SK-N-SH (cell line): ENCODE measurements at regions of chr20 and their contacts with region 1.

Region 1: DNA sequence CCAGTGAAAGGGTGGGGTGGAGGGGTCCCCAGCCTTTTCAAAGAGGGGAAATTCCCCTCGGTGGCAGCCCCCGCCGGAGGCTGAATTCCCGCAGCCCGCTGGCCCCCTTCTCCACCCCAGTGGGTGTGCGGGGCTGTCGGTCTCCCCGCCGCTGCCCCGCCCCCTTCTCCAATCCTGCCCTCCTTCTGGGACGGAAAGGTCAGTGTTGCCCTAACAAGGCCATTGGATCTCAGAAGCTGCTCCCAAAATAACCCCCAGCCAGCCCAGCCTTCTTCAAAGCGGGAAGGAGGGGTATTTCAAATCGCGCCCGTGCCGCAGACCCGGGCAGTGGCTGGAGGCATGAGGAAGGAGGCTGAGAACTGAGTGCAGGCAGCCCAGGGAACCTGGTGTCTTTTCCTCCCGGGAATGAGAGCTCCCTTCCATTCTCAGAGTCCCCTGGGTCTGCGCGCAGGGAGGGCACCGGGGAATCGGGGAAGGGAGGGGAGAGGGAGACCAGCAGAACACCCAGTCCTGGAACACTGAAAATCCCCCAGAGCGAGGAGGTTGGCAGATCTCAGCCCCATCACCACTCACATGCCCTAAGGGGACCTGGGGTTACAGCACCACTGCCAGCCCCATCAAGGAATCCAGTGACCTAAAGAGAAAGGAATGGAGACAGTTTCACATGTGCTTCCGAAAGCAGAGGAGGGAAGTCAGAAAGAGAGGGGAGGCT is at the start of gene JPH2:
- DNase-seq: peak; percentile 64
- H3K4me3 ChIP-seq: peak within 1 kb of the TSS; percentile 39 to 60
- H3K27ac ChIP-seq: peak within 1 kb of the TSS; percentile 54 to 78
- H3K4me1 ChIP-seq: peaks cover 11 to 16% of the 10 kb centered on the region in 2 experiments; a peak in 2 of 4 replicates
- H3K27me3 ChIP-seq: no peaks in the 10 kb centered on the region
- CTCF ChIP-seq: no peak
- EP300 ChIP-seq: no peak
- RAD21 ChIP-seq: no peak
- polyA plus RNA-seq, gene JPH2: 0.67 and 0.75 TPM in 2 replicates

Region 2: DNA sequence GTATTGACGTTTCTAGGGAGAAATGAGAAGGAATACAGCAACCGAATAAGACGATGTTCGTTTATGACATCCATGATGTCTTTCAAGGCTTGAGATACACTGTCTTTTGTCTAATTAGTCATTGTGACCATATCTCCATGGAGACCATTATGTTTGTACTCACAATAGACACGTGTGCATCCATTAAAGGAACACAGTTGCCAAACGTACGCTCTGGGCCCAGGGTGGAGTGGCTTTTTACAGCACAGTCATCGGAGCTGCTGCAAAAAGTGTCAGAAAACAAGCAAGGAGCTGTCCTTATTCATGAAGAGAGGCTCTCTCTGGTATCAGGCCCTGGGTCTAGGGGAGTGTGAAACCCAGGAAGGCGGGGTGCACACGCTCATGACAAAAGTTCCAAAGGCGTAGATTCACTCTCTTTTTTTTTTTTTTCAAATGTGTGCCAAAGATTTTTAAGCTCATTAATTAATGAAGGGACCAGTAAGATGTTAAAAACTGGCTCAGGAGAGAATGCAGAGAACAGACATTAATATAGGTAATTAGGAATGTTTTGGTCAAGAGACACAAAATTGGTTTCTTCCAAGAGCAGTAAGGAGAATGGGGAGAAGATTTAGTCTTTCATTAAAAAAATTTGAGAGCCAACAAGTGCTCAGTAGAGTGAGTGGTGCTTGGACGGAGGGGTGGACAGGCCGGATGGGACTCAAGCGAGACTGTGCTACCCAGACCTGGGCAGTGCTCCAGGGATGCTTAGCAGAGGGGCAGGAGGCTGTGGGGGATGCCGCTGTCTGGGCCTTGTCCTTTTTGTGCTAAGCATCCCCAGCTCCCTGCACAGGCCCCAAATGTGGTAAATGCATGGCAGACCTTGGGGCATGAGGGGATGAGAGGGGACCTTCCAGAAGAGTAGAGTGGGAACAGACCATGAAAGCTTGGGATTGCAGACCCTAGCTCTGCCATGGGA is 425.5 kb before region 1 on chr20:
- CTCF ChIA-PET with region 1: no interaction called
- POLR2A ChIA-PET with region 1: no interaction called
- DNase-seq: no peak
- H3K4me3 ChIP-seq: no peak overlapping the region
- H3K27ac ChIP-seq: no peak overlapping the region
- H3K4me1 ChIP-seq: no peaks in the 10 kb centered on the region; a peak in 1 of 4 replicates
- H3K27me3 ChIP-seq: no peaks in the 10 kb centered on the region; the same call in 1 of the 2 replicates
- CTCF ChIP-seq: no peak
- EP300 ChIP-seq: no peak
- RAD21 ChIP-seq: no peak

Region 3: GRCh38 chr20:44104798-44105517 is 82.2 kb before region 1 on chr20:
- CTCF ChIA-PET with region 1: interaction called, 618 read pairs
- POLR2A ChIA-PET with region 1: no interaction called
- DNase-seq: peak; percentile 52
- H3K4me3 ChIP-seq: no peak overlapping the region
- H3K27ac ChIP-seq: no peak overlapping the region
- H3K4me1 ChIP-seq: peaks cover 0 to 6% of the 10 kb centered on the region in 2 experiments; a peak in 2 of 4 replicates
- H3K27me3 ChIP-seq: no peaks in the 10 kb centered on the region
- CTCF ChIP-seq: no peak
- EP300 ChIP-seq: no peak
- RAD21 ChIP-seq: no peak

Region 4: GRCh38 chr20:44137210-44137801 is 49.9 kb before region 1 on chr20:
- CTCF ChIA-PET with region 1: interaction called, 32 read pairs
- POLR2A ChIA-PET with region 1: no interaction called
- DNase-seq: no peak
- H3K4me3 ChIP-seq: no peak overlapping the region
- H3K27ac ChIP-seq: no peak overlapping the region
- H3K4me1 ChIP-seq: no peaks in the 10 kb centered on the region
- H3K27me3 ChIP-seq: no peaks in the 10 kb centered on the region
- CTCF ChIP-seq: no peak
- EP300 ChIP-seq: no peak
- RAD21 ChIP-seq: no peak

Region 5: DNA sequence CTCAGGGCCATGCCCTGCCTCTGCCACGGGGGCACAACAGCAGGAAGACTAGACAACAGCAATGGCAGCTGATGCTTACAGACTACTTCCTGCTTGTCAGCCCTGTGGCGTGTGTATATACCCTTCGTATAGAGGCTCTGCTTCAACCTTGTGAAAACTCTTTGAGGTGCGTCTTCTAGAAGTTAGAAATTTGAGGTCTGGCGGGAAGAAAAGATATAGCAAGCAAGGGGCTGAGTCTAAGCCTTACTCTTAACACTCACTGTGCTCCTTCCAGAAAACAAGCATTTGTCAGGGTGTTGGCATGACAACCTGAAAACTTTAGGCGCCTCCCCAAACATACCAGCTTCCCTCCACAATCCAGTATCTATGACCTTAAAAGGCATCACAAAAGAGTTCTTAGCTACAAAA is 33.6 kb before region 1 on chr20:
- CTCF ChIA-PET with region 1: interaction called, 12 read pairs
- POLR2A ChIA-PET with region 1: no interaction called
- DNase-seq: no peak
- H3K4me3 ChIP-seq: no peak overlapping the region
- H3K27ac ChIP-seq: no peak overlapping the region
- H3K4me1 ChIP-seq: no peaks in the 10 kb centered on the region
- H3K27me3 ChIP-seq: no peaks in the 10 kb centered on the region
- CTCF ChIP-seq: no peak
- EP300 ChIP-seq: no peak
- RAD21 ChIP-seq: no peak

Region 6: DNA sequence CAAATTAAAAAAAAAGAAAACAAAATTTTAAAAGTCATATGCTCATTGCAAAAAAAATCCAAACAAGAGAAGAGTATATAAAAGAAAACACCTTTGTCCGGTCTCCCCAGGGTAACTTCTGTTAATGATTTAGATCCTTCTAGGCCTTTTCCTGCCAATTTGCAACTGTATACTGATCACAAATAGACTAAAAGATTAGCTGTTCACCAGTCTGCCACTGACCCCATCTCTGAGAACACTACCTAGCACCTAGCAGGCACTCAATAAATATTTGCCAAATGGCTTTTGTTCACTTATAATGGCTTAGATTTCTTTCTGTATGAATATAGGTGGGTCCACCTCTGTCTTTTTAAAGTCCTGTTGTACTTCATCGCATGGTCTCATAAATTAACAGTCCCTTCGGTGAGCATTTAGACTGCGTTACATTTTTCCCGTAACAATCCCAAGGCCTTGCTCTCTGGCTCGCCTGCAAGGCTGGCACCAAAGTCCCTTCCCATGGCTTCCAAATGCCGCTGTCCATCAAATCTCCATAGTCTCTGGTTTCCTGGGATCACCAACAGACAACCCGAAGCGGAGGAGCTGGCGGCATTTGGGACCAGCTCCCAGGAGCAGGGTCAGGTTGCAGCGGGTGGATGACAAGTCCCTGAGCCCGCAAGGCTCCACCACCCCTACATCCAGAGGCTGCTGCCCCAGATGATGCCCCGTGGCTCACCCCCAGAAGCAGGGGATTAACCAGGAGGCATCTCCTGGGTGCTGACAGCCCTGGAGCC is 12.0 kb before region 1 on chr20:
- CTCF ChIA-PET with region 1: interaction called, 54 read pairs
- POLR2A ChIA-PET with region 1: no interaction called
- DNase-seq: no peak
- H3K4me3 ChIP-seq: no peak overlapping the region
- H3K27ac ChIP-seq: no peak overlapping the region
- H3K4me1 ChIP-seq: peaks cover 0 to 17% of the 10 kb centered on the region in 2 experiments; a peak in 3 of 4 replicates
- H3K27me3 ChIP-seq: no peaks in the 10 kb centered on the region
- CTCF ChIP-seq: no peak
- EP300 ChIP-seq: no peak
- RAD21 ChIP-seq: no peak

Region 7: DNA sequence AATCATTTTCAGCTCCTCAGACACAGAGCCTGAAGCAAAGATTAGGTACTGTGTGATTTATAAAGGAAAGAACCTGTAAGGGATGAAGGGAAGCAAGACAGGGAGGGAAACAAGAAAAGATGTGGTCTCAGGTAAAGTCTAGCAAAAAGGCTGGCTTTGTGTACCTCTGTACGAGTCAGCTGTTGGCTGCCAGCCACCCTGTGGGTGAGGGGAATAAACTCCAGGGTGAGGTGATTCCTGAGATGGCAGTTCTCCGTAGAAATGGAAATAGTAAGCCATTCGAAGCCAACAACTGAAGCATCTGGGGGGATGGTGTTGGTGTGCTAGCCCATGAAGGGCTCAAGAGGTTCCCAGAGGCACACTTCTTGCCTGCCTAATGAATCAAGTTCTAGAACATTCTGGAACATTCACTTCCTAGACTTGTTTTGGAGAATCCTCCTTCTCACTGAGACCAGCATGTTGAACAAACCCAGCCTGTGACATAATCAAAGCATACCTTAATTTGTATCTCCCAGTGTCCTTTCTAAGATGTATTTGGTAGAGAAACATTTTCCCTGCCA is 277.9 kb after region 1 on chr20:
- CTCF ChIA-PET with region 1: no interaction called
- POLR2A ChIA-PET with region 1: no interaction called
- DNase-seq: no peak
- H3K4me3 ChIP-seq: no peak overlapping the region
- H3K27ac ChIP-seq: no peak overlapping the region
- H3K4me1 ChIP-seq: no peaks in the 10 kb centered on the region
- H3K27me3 ChIP-seq: no peaks in the 10 kb centered on the region
- CTCF ChIP-seq: no peak
- EP300 ChIP-seq: no peak
- RAD21 ChIP-seq: no peak